Thyroid gland (tissue), 4 donors: ENCODE measurements at regions of chr1 and their contacts with region 1.

Region 1: DNA sequence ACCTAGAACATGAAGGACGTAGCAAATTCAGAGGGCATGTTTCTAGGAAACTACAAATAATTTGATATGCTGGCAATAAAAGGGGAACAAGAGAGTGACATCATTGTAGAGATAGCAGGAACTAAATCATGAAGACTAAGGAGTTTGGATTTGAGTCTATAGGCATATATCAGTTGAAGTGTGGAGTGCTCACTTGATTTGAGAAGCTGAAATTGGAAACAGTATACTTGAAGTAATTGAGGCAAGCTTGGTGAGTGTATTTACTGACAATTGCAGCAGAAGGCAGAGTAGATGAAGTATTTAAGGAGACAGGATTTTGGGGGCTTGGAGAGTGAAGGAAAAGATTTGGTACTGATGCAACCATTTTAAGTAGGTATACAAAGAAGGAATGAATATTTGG is 6.4 kb upstream of the TMCO2 start:
- DNase-seq: no peak
- H3K4me3 ChIP-seq: no peak overlapping the region
- H3K27ac ChIP-seq: no peak overlapping the region
- H3K4me1 ChIP-seq: peaks cover 0 to 7% of the 10 kb centered on the region in 2 donors
- H3K27me3 ChIP-seq: no peaks in the 10 kb centered on the region
- CTCF ChIP-seq: no peak
- POLR2A ChIP-seq: no peak

Region 2: DNA sequence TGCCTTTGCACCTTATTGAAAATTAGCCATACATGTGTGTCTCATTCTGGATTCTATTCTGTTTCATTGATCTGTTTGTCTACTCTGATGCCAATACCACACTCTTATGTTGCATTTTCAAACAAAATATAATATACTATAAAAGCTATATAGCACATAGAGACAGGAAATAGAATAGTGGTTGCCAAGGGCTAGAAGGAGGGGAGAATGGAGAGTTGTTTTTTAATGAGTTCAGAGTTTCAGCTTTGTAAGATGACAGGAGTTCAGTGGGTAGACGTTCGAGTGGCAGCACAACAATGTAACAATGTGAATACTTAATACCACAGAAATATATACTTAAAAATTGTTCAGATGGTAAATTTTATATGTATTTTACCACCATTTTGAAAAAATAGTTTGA is 63.2 kb before region 1 on chr1:
- intact Hi-C with region 1: loop called (anchors 10 kb)
- DNase-seq: no peak
- H3K4me3 ChIP-seq: no peak overlapping the region
- H3K27ac ChIP-seq: no peak overlapping the region
- H3K4me1 ChIP-seq: peaks cover 0 to 1% of the 10 kb centered on the region in 2 donors
- H3K27me3 ChIP-seq: no peaks in the 10 kb centered on the region
- CTCF ChIP-seq: no peak
- POLR2A ChIP-seq: no peak

Region 3: GRCh38 chr1:40317394-40318074 is 76.2 kb after region 1 on chr1:
- intact Hi-C with region 1: no loop called
- DNase-seq: no peak
- H3K4me3 ChIP-seq: peak overlapping the region in 1 of 3 donors; percentile 29
- H3K27ac ChIP-seq: no peak overlapping the region
- H3K4me1 ChIP-seq: peaks cover 16 to 17% of the 10 kb centered on the region in 2 donors
- H3K27me3 ChIP-seq: no peaks in the 10 kb centered on the region
- CTCF ChIP-seq: no peak
- POLR2A ChIP-seq: no peak

Region 4: DNA sequence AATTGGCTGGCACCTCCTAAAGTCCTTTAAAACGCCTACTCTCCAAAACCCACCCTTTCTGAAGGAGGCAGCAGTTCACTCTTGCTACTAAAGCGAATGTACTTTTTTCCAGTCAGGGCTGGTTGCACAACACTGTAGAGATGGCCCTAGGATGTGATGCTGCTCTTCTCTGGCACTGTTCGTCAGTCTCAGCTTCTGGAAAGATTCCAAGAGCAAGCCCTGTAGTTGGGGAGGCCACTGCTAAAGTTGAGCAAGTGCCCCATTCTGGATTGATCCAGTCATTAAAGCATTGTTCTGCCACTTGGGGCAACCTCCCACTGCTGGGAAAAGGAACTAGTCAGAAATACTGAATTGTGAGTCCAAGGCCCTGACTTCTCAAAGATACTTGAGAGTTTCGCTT is 513.7 kb after region 1 on chr1:
- intact Hi-C with region 1: no loop called
- DNase-seq: peak; percentile 22 to 25
- H3K4me3 ChIP-seq: no peak overlapping the region
- H3K27ac ChIP-seq: no peak overlapping the region
- H3K4me1 ChIP-seq: peaks cover 11 to 17% of the 10 kb centered on the region in 2 donors
- H3K27me3 ChIP-seq: no peaks in the 10 kb centered on the region
- CTCF ChIP-seq: no peak
- POLR2A ChIP-seq: no peak